ENCODE measurements at regions of chr19 and their contacts with region 1.

Region 1: GRCh38 chr19:39532233-39533002 is at the start of gene EID2B:
- DNase-seq: peak; percentile 95 to 98 (median 96)
- H3K4me3 ChIP-seq: peak within 1 kb of the TSS; percentile 95
- H3K27ac ChIP-seq: peak within 1 kb of the TSS; percentile 61 to 74
- H3K4me1 ChIP-seq: peaks cover 1% of the 10 kb centered on the region
- H3K27me3 ChIP-seq: no peaks in the 10 kb centered on the region
- CTCF ChIP-seq: peak; percentile 76 to 100 (median 99)
- EP300 ChIP-seq: no peak
- POLR2A ChIP-seq: peak; percentile 81
- total RNA-seq, gene EID2B: 3.1 to 7.0 (median 6.2) TPM

Region 2: GRCh38 chr19:39110263-39110967 is 422.0 kb before region 1 on chr19:
- intact Hi-C with region 1: loop called in 1 of 4 experiments (anchors 10 kb)
- DNase-seq: peak in 4 of 5 donors; percentile 32 to 61 (median 54)
- H3K4me3 ChIP-seq: no peak overlapping the region
- H3K27ac ChIP-seq: no peak overlapping the region
- H3K4me1 ChIP-seq: no peaks in the 10 kb centered on the region
- H3K27me3 ChIP-seq: no peaks in the 10 kb centered on the region
- CTCF ChIP-seq: peak; percentile 24 to 52 (median 40)
- EP300 ChIP-seq: no peak
- POLR2A ChIP-seq: no peak

Region 3: GRCh38 chr19:39131235-39131755 is 401.1 kb before region 1 on chr19:
- intact Hi-C with region 1: loop called in 1 of 4 experiments (anchors 10 kb)
- DNase-seq: peak in 3 of 5 donors; percentile 46 to 59 (median 48)
- H3K4me3 ChIP-seq: no peak overlapping the region
- H3K27ac ChIP-seq: peak overlapping the region; percentile 51 to 63
- H3K4me1 ChIP-seq: peaks cover 32% of the 10 kb centered on the region
- H3K27me3 ChIP-seq: no peaks in the 10 kb centered on the region
- CTCF ChIP-seq: no peak
- EP300 ChIP-seq: no peak
- POLR2A ChIP-seq: no peak

Region 4: DNA sequence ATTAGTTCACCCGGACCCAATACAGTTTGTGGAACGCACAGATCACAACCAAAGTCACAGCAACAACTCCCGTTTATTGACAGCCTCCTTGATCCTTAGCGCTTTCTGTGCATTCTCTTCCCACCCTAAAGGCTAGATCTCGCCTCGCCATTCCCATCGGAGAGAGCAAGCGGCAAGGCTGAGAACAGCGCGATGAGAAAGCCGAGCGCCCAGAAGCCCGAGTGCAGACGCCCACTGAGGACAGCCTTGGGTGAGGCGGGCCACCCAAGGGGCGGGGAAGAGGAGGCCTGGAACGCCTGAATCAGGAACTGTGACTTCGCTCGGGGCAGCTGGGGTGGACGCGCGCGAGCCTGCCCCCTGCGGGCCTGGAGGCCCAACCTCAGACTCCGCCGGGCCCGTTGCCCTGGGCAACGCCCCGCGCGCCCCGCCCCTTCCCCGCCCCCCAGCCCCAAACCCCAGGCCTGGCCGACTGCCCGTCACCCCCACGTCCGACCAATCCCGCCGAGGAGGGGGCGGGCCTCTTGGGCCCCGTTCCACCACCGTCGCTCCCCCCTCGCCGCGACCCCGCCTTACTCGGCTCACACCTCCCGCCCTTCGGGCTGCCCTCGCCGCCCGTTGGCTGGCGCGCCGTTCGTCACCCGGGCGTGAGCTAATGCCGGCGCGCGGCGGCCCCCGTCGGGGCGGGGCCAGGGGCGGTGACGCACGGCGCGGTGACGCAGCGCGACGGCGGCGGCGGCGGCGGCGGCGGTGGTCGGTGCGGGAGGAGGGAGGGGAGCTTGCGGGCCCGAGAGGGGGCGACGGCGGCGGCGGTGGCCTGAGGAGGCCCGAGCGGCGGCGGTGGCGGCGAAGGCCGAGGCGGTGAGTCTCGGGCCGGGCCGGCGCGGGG is 190.5 kb before region 1 on chr19 and contains the start of gene SAMD4B:
- intact Hi-C with region 1: loop called in 1 of 4 experiments (anchors 10 kb)
- DNase-seq: peak; percentile 99 to 100 (median 100)
- H3K4me3 ChIP-seq: peak within 1 kb of the TSS; percentile 93
- H3K27ac ChIP-seq: peak within 1 kb of the TSS; percentile 92 to 95
- H3K4me1 ChIP-seq: peaks cover 4% of the 10 kb centered on the region
- H3K27me3 ChIP-seq: no peaks in the 10 kb centered on the region
- CTCF ChIP-seq: peak; percentile 84 to 94 (median 89)
- EP300 ChIP-seq: peak; percentile 74
- POLR2A ChIP-seq: peak; percentile 78
- total RNA-seq, gene SAMD4B: 59.0 to 139 (median 110) TPM

Region 5: GRCh38 chr19:39390755-39391592 is 141.4 kb before region 1 on chr19 and contains the starts of genes MED29 and PAF1:
- intact Hi-C with region 1: loop called in 1 of 4 experiments (anchors 10 kb)
- DNase-seq: peak; percentile 96 to 98 (median 97)
- H3K4me3 ChIP-seq: peak within 1 kb of the TSS; percentile 70
- H3K27ac ChIP-seq: peak within 1 kb of the TSS; percentile 91 to 99
- H3K4me1 ChIP-seq: peaks cover 3% of the 10 kb centered on the region
- H3K27me3 ChIP-seq: no peaks in the 10 kb centered on the region
- CTCF ChIP-seq: peak in 2 of 3 donors; percentile 35 to 53
- EP300 ChIP-seq: peak; percentile 47
- POLR2A ChIP-seq: peak; percentile 73
- total RNA-seq, gene MED29: 27.7 to 62.9 (median 59.9) TPM
- total RNA-seq, gene PAF1: 31.0 to 60.2 (median 47.4) TPM

Region 6: GRCh38 chr19:39445265-39446111 is 86.9 kb before region 1 on chr19 and contains the start of gene SUPT5H:
- intact Hi-C with region 1: loop called in 2 of 4 experiments (anchors 5 to 10 kb)
- DNase-seq: peak; percentile 96 to 98 (median 97)
- H3K4me3 ChIP-seq: peak within 1 kb of the TSS; percentile 88
- H3K27ac ChIP-seq: peak within 1 kb of the TSS; percentile 36 to 79
- H3K4me1 ChIP-seq: peaks cover 7% of the 10 kb centered on the region
- H3K27me3 ChIP-seq: no peaks in the 10 kb centered on the region
- CTCF ChIP-seq: no peak
- EP300 ChIP-seq: no peak
- POLR2A ChIP-seq: peak; percentile 90
- total RNA-seq, gene SUPT5H: 51.4 to 127 (median 101) TPM

Region 7: DNA sequence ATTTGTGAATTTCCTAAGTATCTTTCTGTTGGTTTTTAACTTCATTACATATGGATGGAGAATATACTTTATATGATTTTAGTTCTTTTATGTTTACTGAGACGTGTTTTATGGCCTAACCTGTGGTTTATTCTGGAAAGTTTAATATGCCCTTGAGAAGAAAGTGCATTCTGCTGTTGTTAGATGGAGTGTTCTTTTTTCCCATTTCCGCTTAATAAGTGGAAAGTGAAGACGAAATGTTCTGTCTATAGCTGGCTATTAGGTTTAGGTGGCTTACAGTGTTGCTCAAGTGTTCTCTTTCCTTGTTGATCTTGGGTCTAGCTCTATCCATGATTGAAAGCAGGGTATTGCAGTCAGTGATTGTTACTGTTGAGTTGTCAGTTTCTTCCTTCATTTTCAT is 69.0 kb before region 1 on chr19:
- intact Hi-C with region 1: no loop called
- DNase-seq: no peak
- H3K4me3 ChIP-seq: no peak overlapping the region
- H3K27ac ChIP-seq: no peak overlapping the region
- H3K4me1 ChIP-seq: no peaks in the 10 kb centered on the region
- H3K27me3 ChIP-seq: no peaks in the 10 kb centered on the region
- CTCF ChIP-seq: no peak
- EP300 ChIP-seq: no peak
- POLR2A ChIP-seq: no peak

Region 8: GRCh38 chr19:39474139-39474622 is 58.2 kb before region 1 on chr19:
- intact Hi-C with region 1: loop called in 2 of 4 experiments (anchors 10 kb)
- DNase-seq: peak; percentile 38 to 69 (median 61)
- H3K4me3 ChIP-seq: no peak overlapping the region
- H3K27ac ChIP-seq: no peak overlapping the region
- H3K4me1 ChIP-seq: no peaks in the 10 kb centered on the region
- H3K27me3 ChIP-seq: no peaks in the 10 kb centered on the region
- CTCF ChIP-seq: peak; percentile 30 to 49 (median 43)
- EP300 ChIP-seq: no peak
- POLR2A ChIP-seq: no peak

Measured in ovary (tissue), 10 donors.